Right ventricle myocardium superior (tissue), 1 donor: ENCODE measurements at regions of chr4 and their contacts with region 1.

Region 1: DNA sequence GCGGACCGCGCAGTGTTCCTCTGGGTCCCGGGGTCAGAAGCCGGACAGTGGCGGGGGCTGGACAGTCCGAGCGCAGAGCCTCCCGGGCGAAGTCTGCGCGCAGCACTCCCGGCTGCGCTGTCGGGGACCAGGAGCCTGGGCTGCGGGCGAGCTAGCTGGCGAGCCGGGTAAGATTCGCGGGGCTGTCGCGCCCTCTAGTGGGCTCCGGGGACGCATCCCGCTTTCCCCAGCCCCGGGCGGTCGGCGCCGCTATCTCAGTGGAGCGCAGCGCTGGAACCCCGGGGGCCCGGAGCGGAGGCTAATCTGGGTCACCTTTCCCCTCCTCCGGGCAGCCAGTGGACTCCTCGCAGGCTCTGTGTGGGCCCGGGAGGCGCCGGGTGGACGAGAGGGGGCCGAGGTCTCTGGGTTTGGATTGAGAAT is 4.2 kb downstream of the PDGFRA start:
- DNase-seq: peak; percentile 91
- ATAC-seq: peak; percentile 88

Region 2: DNA sequence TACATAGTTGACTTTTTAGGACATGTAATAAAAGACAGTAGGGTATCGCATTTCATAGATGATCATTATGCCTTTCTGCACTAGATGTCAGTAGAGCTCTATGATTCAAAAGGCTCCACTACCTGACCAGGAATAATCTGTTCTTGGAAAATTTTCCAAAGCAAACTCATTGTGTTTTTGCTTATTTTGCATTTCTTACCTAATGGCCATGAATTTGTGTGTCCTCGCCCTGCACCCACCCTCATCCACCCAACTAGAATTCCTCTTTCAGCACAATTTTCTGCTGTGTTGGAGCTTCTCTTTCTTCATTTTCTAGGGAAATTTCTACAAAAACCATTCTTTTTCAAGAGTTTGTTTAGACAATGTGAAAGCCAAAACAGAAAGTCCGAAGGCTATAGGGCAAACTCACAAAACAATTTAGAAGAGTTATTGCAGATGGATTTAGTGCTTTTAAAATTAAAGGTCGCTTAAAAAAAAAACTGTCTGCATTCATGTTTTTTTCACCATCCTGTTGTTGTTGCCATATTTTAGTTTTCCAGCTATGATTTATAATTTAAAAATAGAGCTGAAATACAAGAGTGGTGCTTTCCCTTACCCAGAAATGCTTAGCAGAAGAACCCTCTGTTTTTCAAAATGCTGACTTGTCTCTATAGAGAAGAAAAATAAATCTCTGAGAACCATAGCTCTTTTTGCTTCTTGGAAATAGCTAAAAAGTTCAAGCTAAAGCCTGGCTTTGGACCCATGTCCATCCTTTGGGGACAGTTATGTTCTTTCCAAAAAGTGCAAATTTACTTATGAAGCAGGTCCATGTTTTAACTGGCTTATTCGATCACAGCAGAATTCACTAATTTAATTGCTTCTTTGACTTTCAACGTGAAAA is 1998.5 kb before region 1 on chr4:
- intact Hi-C with region 1: loop called (anchors 10 kb)
- DNase-seq: no peak
- ATAC-seq: peak; percentile 93

Region 3: DNA sequence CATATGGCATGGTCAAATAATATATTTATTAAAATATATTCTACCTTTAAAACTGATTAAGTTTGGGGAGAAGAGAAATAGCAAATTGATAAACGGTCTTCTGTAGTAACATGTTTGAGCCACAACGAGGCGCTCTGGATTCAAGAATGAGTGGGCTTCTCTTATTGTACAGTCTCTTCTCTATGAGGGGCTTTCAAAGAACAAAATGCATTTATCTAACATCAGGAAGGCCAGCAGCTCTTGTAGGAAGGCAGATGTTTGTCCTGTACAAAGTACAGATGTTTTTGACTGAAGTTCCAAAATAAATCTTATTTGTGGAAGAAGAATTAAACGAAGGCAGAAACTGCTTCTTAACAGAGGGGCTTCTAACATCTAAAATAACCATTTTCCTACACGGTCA is 1217.6 kb before region 1 on chr4:
- intact Hi-C with region 1: loop called (anchors 5 kb)
- DNase-seq: no peak
- ATAC-seq: peak; percentile 43

Region 4: DNA sequence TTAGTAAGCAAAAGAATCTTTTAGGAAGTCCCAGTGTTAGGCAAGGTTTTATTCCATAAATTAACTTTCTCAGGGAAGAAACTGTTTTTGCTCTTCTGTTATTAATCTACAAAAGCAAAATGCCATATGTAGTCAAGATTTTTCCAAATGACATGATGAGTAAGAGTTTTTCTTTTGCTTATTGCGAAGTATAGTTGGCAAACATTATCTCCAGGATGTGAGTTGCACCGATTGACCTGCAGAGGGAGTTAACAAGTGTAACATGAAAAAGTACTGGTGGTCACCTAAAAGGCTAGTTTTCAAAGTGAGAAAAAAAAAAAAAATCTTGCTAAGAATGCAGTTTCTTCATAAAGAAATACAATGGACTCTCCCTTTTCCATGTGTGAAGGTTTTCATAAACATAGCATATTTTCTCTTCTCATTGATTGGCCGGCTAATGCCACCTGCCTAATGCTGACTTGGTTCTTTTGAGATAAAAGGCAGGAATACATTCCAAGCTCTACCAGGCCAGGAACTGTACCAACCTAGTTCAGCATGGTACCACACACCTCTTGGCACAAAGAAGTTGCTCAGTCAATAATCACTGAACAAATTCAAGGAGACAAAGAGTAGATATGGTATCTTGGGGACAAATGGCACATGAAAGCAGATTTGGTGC is 742.2 kb before region 1 on chr4:
- intact Hi-C with region 1: loop called (anchors 10 kb)
- DNase-seq: no peak
- ATAC-seq: peak; percentile 78

Region 5: DNA sequence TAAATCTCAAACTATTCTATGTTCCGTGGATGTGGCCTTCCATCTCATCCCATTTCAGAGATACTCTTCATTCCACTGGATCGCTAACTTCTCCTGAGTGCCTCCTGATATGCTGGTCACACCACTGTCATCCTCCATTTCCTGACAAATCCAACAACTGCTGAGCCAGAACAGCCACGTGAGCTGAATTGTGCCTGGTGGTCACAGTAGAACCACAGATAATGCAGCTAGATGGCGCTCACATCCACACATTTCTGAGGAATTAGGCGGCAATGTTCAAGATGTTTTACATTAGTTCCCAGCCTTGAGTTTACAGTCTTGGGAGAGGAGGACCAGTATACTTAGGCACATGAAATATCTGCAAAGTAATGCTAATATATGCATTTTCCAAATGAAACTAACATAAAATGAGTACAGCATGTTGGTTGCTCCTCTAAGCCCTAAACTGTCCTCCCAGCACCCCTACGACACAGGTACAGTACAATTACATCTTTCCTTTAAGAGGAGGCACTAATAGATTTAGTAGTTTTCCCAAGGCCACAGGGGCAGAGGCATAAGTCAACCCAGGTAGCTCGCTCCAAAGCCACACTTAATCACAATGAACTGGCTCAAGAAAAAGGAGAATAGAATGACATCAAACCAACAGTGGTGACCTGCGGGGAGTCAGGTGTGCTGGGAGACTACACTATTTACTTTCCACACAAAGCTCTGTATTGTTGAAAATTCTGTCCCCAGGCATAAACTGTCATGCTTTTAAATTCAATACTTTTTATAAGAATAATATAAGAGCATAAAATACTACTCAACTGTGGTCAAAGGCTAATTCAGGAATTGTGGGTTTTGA is 303.1 kb before region 1 on chr4:
- intact Hi-C with region 1: loop called (anchors 5 kb)
- DNase-seq: peak; percentile 66
- ATAC-seq: peak; percentile 96